RWPE1 (cell line): ENCODE measurements at regions of chr4 and their contacts with region 1.

Region 1: GRCh38 chr4:77703666-77704065 is 98.0 kb downstream of the CXCL13 start:
- DNase-seq: no peak
- H3K27ac ChIP-seq: no peak overlapping the region
- CTCF ChIP-seq: no peak

Region 2: GRCh38 chr4:76488905-76489790 is 1214.5 kb before region 1 on chr4:
- CTCF ChIA-PET with region 1: interaction called, 11 read pairs
- POLR2A ChIA-PET with region 1: no interaction called
- DNase-seq: no peak
- H3K27ac ChIP-seq: no peak overlapping the region
- CTCF ChIP-seq: no peak

Region 3: DNA sequence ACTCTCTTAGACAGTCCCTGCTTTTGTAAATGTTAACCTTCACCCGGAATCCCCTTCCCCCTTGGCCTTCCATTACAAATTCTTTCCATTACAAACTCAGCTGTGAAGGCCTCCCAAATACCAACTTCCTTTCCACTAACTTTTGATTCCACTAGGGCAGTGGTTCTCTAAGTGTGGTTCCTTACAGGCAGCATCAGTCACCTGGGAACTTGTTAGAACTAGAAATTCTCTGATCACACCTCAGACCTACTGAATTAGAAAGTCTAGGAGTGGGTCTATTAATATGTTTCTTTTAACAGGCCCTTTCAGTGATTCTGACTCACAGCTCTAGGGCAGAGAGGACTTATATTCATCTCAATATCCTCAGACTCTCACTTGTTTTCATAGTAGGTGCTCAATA is 140.0 kb after region 1 on chr4:
- CTCF ChIA-PET with region 1: no interaction called
- POLR2A ChIA-PET with region 1: no interaction called
- DNase-seq: no peak
- H3K27ac ChIP-seq: no peak overlapping the region
- CTCF ChIP-seq: no peak